ENCODE measurements at regions of chrX and their contacts with region 1.

Region 1: GRCh38 chrX:154370882-154371770 is 3.3 kb downstream of the FLNA start:
- DNase-seq: peak; percentile 53
- H3K4me3 ChIP-seq: peak overlapping the region; percentile 89
- H3K27me3 ChIP-seq: no peaks in the 10 kb centered on the region
- CTCF ChIP-seq: no peak

Region 2: DNA sequence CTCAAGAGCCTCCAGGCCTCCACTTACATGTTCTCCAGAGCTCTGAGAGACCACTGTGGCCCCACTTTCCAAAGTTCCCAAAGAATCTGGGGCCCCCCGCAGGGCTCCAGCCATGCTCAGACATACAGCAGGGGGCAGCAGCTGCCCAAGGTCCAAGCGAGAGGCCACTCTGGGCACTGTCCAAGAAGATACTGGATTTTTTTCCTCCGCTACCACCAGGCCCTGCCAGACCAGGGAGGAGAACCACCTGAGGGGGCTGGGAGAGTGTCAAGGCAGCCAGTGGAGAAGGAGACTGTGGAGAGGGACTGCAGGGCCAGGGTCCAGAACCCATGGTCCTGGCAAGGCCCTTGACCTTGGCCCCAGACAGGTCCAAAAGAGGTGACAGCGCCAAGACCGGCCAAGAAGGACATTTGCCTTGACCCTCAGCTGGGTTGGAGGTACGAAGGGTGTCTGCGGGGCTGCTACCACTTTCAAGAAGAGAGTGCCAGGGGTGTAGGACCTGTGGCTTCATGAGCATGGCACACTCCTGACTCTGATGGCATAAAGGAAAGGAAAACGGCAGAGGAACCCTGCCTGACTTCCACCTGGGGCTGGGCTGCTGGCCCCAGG is 13.3 kb after region 1 on chrX:
- CTCF ChIA-PET with region 1: interaction called, 17 read pairs
- POLR2A ChIA-PET with region 1: interaction called, 9 read pairs
- DNase-seq: no peak
- H3K4me3 ChIP-seq: no peak overlapping the region
- H3K27me3 ChIP-seq: no peaks in the 10 kb centered on the region
- CTCF ChIP-seq: peak; percentile 57

Region 3: DNA sequence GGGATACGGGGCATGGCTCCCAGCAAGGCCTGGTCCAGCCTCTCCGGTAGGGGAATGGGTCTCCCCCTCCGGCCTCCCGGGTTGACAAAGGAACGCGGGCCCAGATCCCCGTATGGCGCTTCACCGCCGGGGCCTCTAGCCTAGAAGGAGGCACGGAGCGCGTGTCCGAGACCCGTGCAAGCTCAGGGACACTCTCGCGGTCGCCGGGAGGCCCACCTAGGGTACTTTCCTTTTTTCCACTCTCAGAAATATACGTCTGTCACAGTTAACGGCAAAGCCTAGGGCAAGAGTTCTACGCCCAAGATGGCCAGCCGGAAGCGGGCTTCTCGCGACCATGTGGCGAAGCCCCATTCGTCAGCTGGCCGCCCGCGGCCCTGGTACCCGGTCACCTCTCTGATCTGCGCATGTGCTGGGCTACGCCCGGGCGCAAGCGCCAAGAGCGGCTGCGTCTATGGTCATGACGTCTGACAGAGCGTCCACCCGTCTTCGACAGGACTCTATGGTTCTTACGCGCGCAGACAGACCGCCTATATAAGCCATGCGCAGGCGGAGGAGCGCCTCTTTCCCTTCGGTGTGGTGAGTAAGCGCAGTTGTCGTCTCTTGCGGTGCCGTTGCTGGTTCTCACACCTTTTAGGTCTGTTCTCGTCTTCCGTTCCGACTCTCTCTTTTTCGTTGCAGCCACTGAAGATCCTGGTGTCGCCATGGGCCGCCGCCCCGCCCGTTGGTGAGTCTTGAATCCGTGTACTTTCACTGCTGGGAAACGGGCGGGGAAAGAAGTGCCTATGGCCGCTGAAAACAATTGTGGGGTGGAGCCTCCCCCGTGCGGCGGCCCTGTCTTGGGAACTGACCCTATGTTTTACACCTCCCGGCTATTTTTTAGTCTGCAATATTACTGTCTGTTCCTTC is 26.9 kb after region 1 on chrX and contains the start of gene RPL10:
- CTCF ChIA-PET with region 1: interaction called, 16 read pairs
- POLR2A ChIA-PET with region 1: interaction called, 4 read pairs
- DNase-seq: peak; percentile 82
- H3K4me3 ChIP-seq: peak within 1 kb of the TSS; percentile 81
- H3K27me3 ChIP-seq: no peaks in the 10 kb centered on the region
- CTCF ChIP-seq: no peak
- polyA plus RNA-seq, gene RPL10: 5,693 and 7,037 TPM in 2 replicates

Region 4: GRCh38 chrX:154526901-154527675 is 156.0 kb after region 1 on chrX:
- CTCF ChIA-PET with region 1: interaction called, 12 read pairs
- POLR2A ChIA-PET with region 1: interaction called, 14 read pairs
- DNase-seq: no peak
- H3K4me3 ChIP-seq: peak overlapping the region; percentile 24
- H3K27me3 ChIP-seq: no peaks in the 10 kb centered on the region
- CTCF ChIP-seq: peak; percentile 67

Region 5: GRCh38 chrX:154649503-154650470 is 278.7 kb after region 1 on chrX:
- CTCF ChIA-PET with region 1: no interaction called
- POLR2A ChIA-PET with region 1: no interaction called
- DNase-seq: no peak
- H3K4me3 ChIP-seq: no peak overlapping the region
- H3K27me3 ChIP-seq: no peaks in the 10 kb centered on the region
- CTCF ChIP-seq: no peak